Activated CD4-positive, alpha-beta T cell treated with anti-CD3 and anti-CD28 coated beads, Interleukin-2, amount 10 ng/mL, durations not matched to agents 24 days and 14 days (primary cell): ENCODE measurements at regions of chr1 and their contacts with region 1.

Region 1: GRCh38 chr1:234978397-234979295 is 150.0 kb downstream of the TOMM20 start:
- DNase-seq: peak; percentile 82
- H3K4me3 Mint-ChIP-seq: peak overlapping the region; percentile 79
- H3K27ac Mint-ChIP-seq: peak overlapping the region; percentile 98
- H3K4me1 Mint-ChIP-seq: peaks cover 80% of the 10 kb centered on the region
- H3K27me3 Mint-ChIP-seq: no peaks in the 10 kb centered on the region

Region 2: GRCh38 chr1:234709473-234710228 is 269.0 kb before region 1 on chr1:
- intact Hi-C with region 1: no loop called
- DNase-seq: no peak
- H3K4me3 Mint-ChIP-seq: no peak overlapping the region
- H3K27ac Mint-ChIP-seq: peak overlapping the region; percentile 42
- H3K4me1 Mint-ChIP-seq: peaks cover 13% of the 10 kb centered on the region
- H3K27me3 Mint-ChIP-seq: no peaks in the 10 kb centered on the region

Region 3: DNA sequence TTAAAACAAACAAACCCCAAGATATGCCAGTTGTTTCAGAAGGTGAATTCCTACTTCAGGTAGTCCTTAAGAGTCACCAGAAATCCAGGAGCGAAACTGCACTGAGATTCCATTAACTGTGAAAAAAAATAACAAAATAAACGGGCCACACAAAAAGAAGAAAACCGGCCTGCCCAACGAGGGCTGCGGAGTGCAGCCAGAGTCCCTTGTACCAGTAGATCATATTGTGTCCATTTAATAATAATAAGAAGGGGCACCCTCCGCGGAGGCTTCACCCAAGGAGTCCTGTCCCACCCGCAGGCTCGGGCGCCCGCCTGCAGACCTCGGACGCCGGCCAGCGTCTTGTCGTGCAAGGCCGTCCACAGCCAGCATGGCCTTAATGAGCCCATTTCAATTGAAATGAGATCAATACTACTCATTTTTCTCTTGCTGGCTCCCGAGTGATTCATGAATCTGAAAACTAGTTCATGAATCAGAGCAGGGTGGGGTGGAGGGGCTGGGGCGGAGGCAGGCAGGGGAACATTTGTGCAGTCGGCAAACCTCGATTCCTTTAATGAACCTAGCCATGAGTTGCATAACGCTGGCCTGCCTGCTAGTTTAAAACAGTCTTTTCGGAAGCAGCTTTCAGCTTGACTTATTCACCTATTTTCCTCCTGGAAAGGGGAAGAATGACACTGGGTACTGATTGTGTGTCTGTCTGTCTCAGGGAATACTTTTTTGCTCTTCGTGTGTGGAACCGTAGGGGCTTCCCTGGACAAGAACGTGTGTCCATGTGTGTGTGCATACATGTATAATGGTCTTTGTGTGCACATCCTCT is 255.5 kb before region 1 on chr1:
- intact Hi-C with region 1: loop called (anchors 2 kb)
- DNase-seq: peak; percentile 66
- H3K4me3 Mint-ChIP-seq: peak overlapping the region; percentile 76
- H3K27ac Mint-ChIP-seq: peak overlapping the region; percentile 96
- H3K4me1 Mint-ChIP-seq: peaks cover 82% of the 10 kb centered on the region
- H3K27me3 Mint-ChIP-seq: peaks cover 2% of the 10 kb centered on the region

Region 4: DNA sequence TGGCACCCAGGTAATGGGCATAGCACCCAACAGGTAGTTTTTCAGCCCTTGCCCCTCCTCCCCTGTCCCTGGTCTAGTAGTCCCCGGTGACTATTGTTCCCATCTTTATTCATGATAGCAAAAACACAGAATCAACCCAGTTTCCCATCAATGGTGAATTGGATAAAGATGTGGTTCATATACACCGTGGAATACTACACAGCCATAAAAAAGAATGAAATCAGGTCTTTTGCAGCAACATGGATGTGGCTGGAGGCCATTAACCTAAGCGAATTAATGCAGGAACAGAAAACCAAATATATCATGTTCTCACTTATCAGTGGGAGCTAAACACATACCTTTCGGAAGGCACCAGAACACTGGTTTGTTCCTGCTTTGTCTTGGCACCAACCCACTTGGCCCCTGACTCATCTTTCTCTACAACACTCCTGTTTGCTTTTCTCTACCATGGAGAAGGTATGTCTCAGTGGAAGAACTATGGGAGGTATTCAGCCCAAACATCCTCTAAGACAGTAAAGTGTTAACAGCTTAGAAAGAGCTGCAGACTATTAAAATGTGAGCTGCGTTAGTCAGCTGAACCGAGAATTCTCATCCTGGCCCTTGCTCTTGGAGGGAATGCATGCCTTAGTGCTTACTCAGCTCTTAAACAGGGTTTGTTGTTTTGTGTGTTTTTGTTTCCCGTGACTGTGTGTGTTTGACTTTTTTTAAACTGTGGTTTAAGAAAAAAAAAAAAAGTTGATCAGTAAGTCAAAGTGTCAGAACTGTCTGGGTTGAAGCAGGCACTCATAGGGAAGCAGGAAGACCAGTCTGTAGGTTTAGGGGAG is 53.0 kb before region 1 on chr1:
- intact Hi-C with region 1: loop called (anchors 2 kb)
- DNase-seq: peak; percentile 78
- H3K4me3 Mint-ChIP-seq: peak overlapping the region; percentile 83
- H3K27ac Mint-ChIP-seq: peak overlapping the region; percentile 95
- H3K4me1 Mint-ChIP-seq: peaks cover 59% of the 10 kb centered on the region
- H3K27me3 Mint-ChIP-seq: no peaks in the 10 kb centered on the region

Region 5: GRCh38 chr1:234955107-234955731 is 23.4 kb before region 1 on chr1:
- intact Hi-C with region 1: no loop called
- DNase-seq: peak; percentile 75
- H3K4me3 Mint-ChIP-seq: peak overlapping the region; percentile 50
- H3K27ac Mint-ChIP-seq: peak overlapping the region; percentile 96
- H3K4me1 Mint-ChIP-seq: peaks cover 61% of the 10 kb centered on the region
- H3K27me3 Mint-ChIP-seq: no peaks in the 10 kb centered on the region

Region 6: GRCh38 chr1:235050911-235051360 is 72.3 kb after region 1 on chr1:
- intact Hi-C with region 1: loop called (anchors 2 kb)
- DNase-seq: no peak
- H3K4me3 Mint-ChIP-seq: no peak overlapping the region
- H3K27ac Mint-ChIP-seq: peak overlapping the region; percentile 66
- H3K4me1 Mint-ChIP-seq: peaks cover 44% of the 10 kb centered on the region
- H3K27me3 Mint-ChIP-seq: no peaks in the 10 kb centered on the region

Region 7: DNA sequence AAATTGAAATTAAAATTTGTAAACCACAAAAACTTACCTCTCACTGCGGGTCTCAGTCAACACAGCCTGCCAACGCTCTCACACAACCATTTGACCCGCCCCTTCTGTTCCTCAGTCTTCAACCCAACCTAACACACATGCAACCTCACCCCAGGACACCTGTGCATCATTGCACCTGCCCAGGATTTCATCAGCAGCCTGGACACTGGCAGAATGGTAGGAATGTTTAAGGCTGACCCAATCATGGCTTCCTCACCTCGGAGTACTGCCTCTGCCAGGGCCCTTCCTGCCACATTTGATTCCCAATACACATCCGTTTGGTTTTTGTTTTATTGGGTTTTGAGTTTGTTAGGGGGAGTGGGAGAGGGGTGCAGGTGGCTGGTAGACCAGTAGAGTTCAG is 109.2 kb after region 1 on chr1:
- intact Hi-C with region 1: no loop called
- DNase-seq: no peak
- H3K4me3 Mint-ChIP-seq: no peak overlapping the region
- H3K27ac Mint-ChIP-seq: no peak overlapping the region
- H3K4me1 Mint-ChIP-seq: peaks cover 14% of the 10 kb centered on the region
- H3K27me3 Mint-ChIP-seq: no peaks in the 10 kb centered on the region